ENCODE measurements at regions of chr4 and their contacts with region 1.

Region 1: DNA sequence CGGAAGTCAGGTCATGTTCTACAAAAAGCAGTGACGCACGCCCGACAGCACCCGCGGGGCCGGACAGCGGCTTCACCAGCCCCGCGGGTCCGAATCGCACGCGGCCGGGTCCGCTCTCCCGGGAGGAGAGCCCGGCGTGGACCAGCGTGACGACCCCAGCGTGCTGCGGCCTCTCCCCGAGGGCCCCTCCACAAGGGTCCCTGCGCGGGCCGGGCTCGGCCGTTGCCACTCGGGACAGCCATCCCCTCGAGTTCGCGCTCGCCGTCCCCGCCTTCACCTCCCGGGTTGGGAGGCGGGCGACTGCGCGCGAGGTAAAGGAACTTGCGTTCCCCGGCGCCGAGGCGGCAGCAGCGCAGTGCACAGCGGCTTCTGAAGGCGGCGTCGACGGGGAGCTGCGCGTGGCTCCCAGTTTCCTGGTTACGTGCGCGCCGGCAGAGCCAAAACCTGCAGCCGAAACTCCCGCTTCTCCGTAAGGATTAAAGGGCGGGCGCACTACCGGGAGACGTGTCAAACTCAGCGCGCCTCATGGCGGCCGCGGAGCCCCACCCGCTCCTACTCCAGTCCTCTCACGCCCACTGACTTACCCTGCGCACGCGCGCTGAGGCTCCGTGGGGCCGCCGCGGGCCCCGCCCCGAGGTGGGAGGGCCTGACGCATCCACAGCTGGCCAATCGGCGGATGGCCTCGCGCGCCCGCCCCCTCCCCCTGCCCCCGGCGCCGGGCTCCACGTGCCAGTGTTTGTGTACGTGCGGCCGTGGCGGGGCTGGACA is 416 bp upstream of the LRP2BP start:
- DNase-seq: peak; percentile 98
- H3K4me3 Mint-ChIP-seq: peak overlapping the region; percentile 94
- H3K27ac Mint-ChIP-seq: peak overlapping the region; percentile 97
- H3K4me1 Mint-ChIP-seq: peaks cover 69% of the 10 kb centered on the region
- H3K27me3 Mint-ChIP-seq: peaks cover 2% of the 10 kb centered on the region

Region 2: DNA sequence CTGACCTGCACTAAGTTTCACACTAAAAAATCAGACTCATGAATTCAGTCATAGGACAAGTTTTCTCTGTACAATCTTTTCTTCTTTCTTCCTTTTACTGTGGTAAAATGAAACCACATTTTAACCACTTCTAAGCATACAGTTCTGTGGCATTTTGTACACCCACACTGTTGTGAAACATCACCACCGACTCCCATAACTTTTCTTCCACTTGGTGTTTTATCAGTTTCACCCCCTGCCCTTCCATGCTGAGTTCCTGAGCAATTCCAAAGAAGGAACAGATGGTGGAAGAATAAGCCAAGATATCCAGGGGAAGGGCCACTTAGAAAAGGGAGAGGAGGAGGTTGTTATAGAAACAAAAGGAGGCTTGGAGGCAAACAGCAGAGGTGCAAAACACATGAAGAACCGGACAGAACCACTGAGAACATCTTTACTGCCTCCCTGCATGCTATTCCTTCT is 230.5 kb before region 1 on chr4:
- intact Hi-C with region 1: loop called (anchors 1 kb)
- DNase-seq: no peak
- H3K4me3 Mint-ChIP-seq: no peak overlapping the region
- H3K27ac Mint-ChIP-seq: peak overlapping the region; percentile 80
- H3K4me1 Mint-ChIP-seq: peaks cover 20% of the 10 kb centered on the region
- H3K27me3 Mint-ChIP-seq: peaks cover 32% of the 10 kb centered on the region

Region 3: DNA sequence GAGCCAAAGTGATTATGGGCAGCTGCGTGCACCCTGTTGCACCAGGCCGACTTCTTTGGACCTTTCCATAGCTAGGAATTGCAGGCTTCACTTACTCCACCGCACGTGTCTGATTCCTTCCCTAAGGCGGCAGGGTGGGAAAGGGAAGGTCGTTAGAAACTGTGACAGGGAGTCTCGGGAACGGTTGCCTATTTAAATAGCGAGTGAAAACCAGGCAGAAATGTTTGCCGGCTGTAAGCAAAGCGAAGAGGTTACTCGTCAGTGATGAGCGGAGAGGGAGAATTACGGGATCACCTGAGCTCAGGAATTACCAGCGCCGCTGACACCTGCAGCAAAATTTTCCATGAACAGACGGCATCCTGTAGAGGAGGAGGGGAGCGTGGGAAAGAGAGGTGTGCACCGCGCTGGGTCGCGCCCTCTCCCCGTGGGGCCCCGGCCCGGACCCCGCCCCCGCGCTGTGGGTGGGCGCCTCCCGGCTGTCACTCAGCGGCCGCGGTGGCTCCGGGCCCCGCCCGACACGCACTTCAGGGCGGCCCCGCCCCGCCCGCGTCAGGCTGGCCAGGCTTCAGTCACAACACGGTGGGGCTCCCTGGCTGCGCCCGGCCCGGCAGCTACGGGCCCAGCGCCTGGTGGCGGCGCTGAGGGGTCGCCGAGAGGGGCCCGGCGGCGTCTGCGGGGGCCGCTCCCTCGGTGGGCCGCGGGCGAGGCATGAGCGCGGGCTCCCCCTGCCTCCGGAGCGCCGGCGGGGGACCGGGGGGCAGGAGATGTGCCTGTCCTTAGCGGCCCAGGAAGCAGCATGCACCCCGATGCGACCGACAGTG is 186.9 kb before region 1 on chr4 and contains the start of gene SNX25:
- intact Hi-C with region 1: loop called (anchors 1 kb)
- DNase-seq: peak; percentile 86
- H3K4me3 Mint-ChIP-seq: peak within 1 kb of the TSS; percentile 92
- H3K27ac Mint-ChIP-seq: peak within 1 kb of the TSS; percentile 86
- H3K4me1 Mint-ChIP-seq: peaks cover 38% of the 10 kb centered on the region
- H3K27me3 Mint-ChIP-seq: peaks cover 4% of the 10 kb centered on the region
- total RNA-seq, gene SNX25: 22.9 and 25.3 TPM in 2 replicates

Region 4: GRCh38 chr4:185343726-185344581 is 52.2 kb before region 1 on chr4:
- intact Hi-C with region 1: loop called (anchors 1 kb)
- DNase-seq: no peak
- H3K4me3 Mint-ChIP-seq: peak overlapping the region; percentile 51
- H3K27ac Mint-ChIP-seq: peak overlapping the region; percentile 89
- H3K4me1 Mint-ChIP-seq: peaks cover 68% of the 10 kb centered on the region
- H3K27me3 Mint-ChIP-seq: no peaks in the 10 kb centered on the region

Region 5: GRCh38 chr4:185471235-185472102 is 75.3 kb after region 1 on chr4 and contains the start of gene CCDC110:
- intact Hi-C with region 1: loop called (anchors 1 kb)
- DNase-seq: peak; percentile 77
- H3K4me3 Mint-ChIP-seq: peak within 1 kb of the TSS; percentile 89
- H3K27ac Mint-ChIP-seq: peak within 1 kb of the TSS; percentile 47
- H3K4me1 Mint-ChIP-seq: peaks cover 4% of the 10 kb centered on the region
- H3K27me3 Mint-ChIP-seq: peaks cover 52% of the 10 kb centered on the region
- total RNA-seq, gene CCDC110: not detected in 2 replicates

Region 6: GRCh38 chr4:185500035-185500434 is 103.9 kb after region 1 on chr4:
- intact Hi-C with region 1: no loop called
- DNase-seq: no peak
- H3K4me3 Mint-ChIP-seq: no peak overlapping the region
- H3K27ac Mint-ChIP-seq: no peak overlapping the region
- H3K4me1 Mint-ChIP-seq: no peaks in the 10 kb centered on the region
- H3K27me3 Mint-ChIP-seq: peaks cover 6% of the 10 kb centered on the region

Region 7: DNA sequence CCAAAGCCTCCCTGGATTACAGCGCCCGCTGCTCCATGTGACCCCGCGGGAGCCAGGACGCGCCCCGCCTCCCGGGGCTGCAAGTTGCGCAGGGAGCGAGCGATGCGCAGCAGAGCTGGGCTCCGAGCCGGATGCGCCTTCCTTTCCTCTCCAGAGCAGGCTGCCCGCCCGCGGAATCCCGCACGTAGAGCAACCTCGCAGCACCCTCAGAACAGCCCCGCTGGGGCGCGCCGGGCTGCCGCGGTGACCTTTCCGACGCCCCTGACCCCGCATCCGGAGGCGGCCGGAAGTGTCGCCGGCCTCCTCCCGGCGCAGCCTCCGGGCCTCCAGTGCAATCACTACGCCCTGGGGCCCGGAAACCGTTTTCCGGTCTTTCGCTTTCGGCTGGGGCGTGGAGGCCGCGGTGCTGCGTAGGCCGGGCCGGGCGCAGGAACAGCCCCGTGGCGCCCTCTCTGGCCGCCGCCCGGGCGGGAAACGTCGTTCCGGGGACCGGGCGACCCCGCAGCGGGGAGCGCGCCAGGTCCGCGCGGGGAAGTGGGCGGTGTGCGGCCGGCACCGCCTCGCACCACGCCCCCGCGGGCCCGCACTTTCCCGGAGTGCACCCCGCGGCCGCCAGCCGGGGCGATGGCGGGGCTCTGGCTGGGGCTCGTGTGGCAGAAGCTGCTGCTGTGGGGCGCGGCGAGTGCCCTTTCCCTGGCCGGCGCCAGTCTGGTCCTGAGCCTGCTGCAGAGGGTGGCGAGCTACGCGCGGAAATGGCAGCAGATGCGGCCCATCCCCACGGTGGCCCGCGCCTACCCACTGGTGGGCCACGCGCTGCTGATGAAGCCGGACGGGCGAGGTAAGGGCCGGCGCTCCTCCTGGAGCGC is 795.3 kb after region 1 on chr4 and contains the start of gene CYP4V2:
- intact Hi-C with region 1: loop called (anchors 5 kb)
- DNase-seq: peak; percentile 90
- H3K4me3 Mint-ChIP-seq: peak within 1 kb of the TSS; percentile 96
- H3K27ac Mint-ChIP-seq: peak within 1 kb of the TSS; percentile 96
- H3K4me1 Mint-ChIP-seq: peaks cover 28% of the 10 kb centered on the region
- H3K27me3 Mint-ChIP-seq: peaks cover 2% of the 10 kb centered on the region
- total RNA-seq, gene CYP4V2: 8.3 and 8.8 TPM in 2 replicates